ENCODE measurements at regions of chr16 and their contacts with region 1.

Region 1: DNA sequence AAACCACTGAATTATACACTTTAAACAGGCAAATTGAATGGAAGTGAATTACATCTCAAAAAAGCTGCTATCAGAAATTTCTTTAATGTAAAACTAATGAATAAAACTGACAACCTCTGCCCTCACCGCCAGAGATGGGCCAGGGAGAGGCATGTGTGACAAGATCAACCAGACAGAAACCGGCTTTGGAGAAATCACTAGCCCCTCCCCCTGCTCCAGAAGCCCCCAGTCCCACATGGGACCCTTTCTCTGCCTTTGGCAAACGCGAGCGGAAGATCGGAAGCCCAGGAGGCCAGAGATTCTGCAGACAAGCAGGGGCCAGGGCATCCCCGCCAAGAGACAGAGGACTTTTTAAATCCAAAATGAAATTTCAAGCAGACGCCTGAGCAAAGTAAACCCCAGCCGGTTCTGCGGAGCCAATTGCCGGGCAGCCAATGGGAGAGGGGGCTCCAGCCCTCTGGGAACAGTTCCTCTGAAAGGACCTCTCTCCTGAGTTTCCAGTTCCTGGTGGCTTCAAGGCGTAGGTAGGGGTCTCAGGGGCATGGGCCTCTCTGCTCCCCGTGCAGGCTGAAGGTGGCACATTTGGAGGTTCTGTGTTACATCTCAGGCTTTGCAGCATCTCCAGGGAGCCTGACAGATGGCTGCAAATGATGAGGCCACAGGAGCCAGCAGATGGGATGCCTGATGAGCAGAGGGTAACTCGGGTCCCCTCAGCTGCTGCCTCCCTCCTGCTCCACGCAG is 118.1 kb downstream of the GSG1L start:
- DNase-seq: no peak
- H3K4me3 Mint-ChIP-seq: no peak overlapping the region
- H3K27ac Mint-ChIP-seq: no peak overlapping the region
- H3K4me1 Mint-ChIP-seq: no peaks in the 10 kb centered on the region
- H3K27me3 Mint-ChIP-seq: no peaks in the 10 kb centered on the region

Region 2: GRCh38 chr16:27925612-27926011 is 19.8 kb before region 1 on chr16:
- intact Hi-C with region 1: no loop called
- DNase-seq: no peak
- H3K4me3 Mint-ChIP-seq: no peak overlapping the region
- H3K27ac Mint-ChIP-seq: no peak overlapping the region
- H3K4me1 Mint-ChIP-seq: no peaks in the 10 kb centered on the region
- H3K27me3 Mint-ChIP-seq: peaks cover 6% of the 10 kb centered on the region

Region 3: DNA sequence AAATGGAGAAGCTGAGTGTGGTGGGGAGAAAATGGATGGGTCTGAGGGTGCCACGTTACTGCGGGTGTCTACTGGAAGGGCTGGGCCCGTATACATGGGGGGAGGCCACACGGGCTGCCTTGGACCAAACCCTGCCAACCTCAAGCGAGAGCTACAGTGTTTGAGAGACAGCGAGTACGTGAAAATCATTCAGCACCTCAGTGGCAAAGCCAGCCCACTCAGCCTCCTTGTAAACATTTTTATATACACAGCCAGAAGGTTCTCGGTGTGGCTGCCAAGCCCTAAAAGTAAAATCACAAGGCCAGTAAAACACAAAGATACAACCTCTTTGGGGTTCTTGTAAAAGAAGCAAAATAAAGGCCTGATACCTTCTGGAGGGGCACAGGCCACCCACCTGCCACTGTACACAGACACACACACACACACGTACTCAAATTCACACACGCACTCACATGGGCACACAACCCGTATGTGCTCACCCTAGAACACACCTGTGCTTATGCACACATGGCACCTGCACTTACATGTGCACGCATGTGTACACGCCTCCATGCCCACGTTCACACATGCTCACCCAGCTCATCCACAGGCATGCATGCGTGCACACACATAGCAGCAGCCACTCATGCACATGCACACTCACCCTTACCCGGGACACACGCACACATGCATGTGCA is 15.4 kb after region 1 on chr16:
- intact Hi-C with region 1: no loop called
- DNase-seq: no peak
- H3K4me3 Mint-ChIP-seq: no peak overlapping the region
- H3K27ac Mint-ChIP-seq: no peak overlapping the region
- H3K4me1 Mint-ChIP-seq: no peaks in the 10 kb centered on the region
- H3K27me3 Mint-ChIP-seq: no peaks in the 10 kb centered on the region

Region 4: GRCh38 chr16:27999687-28000086 is 54.3 kb after region 1 on chr16:
- intact Hi-C with region 1: loop called (anchors 10 kb)
- DNase-seq: no peak
- H3K4me3 Mint-ChIP-seq: no peak overlapping the region
- H3K27ac Mint-ChIP-seq: no peak overlapping the region
- H3K4me1 Mint-ChIP-seq: peaks cover 16% of the 10 kb centered on the region
- H3K27me3 Mint-ChIP-seq: peaks cover 5% of the 10 kb centered on the region

Measured in activated T-helper 1 cell treated with anti-CD3 and anti-CD28 coated beads, Interleukin-12 subunit alpha, Interleukin-12 subunit beta, Interleukin-2, Interleukin-4 antibody, amounts not matched to agents 30 ng/mL and 10 ng/mL and 1 ng/mL, durations not matched to agents 14 hours and 24 hours and 36 hours (primary cell).